Prostate gland (tissue), 2 donors: ENCODE measurements at regions of chr3 and their contacts with region 1.

Region 1: DNA sequence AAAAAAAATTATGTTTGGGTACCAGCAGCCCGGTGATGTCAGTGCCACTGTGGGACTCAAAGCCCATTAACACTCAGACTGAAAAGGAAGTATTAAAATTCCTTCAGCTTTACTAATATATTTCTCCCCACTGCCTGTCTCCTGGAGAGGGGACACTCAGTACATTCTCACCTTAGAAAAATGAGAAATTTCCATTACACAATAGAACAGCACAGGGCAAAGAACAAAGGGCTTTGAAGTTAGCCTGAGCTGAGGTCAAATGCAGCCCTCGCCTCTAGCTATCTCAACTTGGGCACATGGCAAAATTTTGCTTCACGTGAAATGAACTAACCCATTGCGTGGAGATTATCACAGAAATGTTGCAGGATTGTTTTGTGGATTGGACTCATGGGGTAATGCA is 80.8 kb downstream of the RARB start:
- DNase-seq: no peak
- H3K4me3 ChIP-seq: no peak overlapping the region
- H3K27ac ChIP-seq: peak overlapping the region; percentile 36 to 56
- H3K4me1 ChIP-seq: no peaks in the 10 kb centered on the region
- H3K27me3 ChIP-seq: no peaks in the 10 kb centered on the region
- CTCF ChIP-seq: no peak
- POLR2A ChIP-seq: no peak

Region 2: GRCh38 chr3:24420224-24420623 is 1088.7 kb before region 1 on chr3:
- intact Hi-C with region 1: no loop called
- DNase-seq: no peak
- H3K4me3 ChIP-seq: no peak overlapping the region
- H3K27ac ChIP-seq: no peak overlapping the region
- H3K4me1 ChIP-seq: no peaks in the 10 kb centered on the region
- H3K27me3 ChIP-seq: no peaks in the 10 kb centered on the region
- CTCF ChIP-seq: no peak
- POLR2A ChIP-seq: no peak

Region 3: DNA sequence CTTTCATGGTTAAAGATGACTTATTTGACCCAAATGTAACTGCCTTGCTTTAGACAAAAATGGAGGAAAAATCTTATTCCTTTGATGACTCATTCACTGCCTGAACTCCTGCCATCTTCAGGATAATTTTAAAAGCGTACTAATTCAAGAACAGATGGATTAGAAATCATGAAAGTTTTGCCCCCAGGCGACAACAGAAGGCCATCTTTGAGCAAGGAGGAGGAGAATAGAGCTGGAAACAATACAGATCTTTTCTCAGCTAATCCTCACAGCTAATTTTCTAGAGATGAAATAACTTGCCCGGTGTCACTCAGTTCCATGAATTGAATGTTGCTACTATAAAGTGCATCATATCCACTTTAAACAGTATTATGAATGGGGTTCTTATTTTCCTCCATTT is 405.5 kb before region 1 on chr3:
- intact Hi-C with region 1: no loop called
- DNase-seq: no peak
- H3K4me3 ChIP-seq: no peak overlapping the region
- H3K27ac ChIP-seq: no peak overlapping the region
- H3K4me1 ChIP-seq: no peaks in the 10 kb centered on the region
- H3K27me3 ChIP-seq: no peaks in the 10 kb centered on the region
- CTCF ChIP-seq: no peak
- POLR2A ChIP-seq: no peak

Region 4: DNA sequence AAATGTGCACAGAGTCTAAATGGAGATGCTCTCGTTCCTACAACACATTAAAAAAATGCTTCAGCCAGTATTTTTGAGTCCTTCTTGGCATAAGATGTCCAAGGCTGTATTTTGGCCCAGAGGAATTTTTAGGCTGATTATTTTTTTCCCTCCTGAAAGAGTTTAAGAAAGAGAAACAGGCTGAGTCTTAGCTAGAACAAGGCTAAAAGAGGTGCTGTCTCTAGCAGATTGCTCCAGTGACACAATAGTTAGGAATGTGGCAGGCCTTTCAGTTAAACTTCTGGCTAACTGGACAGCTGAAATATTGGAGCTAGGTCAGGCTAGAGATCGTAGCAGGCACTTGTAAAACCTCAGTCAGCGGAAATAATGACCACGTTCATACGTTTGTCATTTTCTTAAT is 352.3 kb before region 1 on chr3:
- intact Hi-C with region 1: loop called (anchors 10 kb)
- DNase-seq: no peak
- H3K4me3 ChIP-seq: no peak overlapping the region
- H3K27ac ChIP-seq: no peak overlapping the region
- H3K4me1 ChIP-seq: no peaks in the 10 kb centered on the region
- H3K27me3 ChIP-seq: no peaks in the 10 kb centered on the region
- CTCF ChIP-seq: no peak
- POLR2A ChIP-seq: no peak

Region 5: DNA sequence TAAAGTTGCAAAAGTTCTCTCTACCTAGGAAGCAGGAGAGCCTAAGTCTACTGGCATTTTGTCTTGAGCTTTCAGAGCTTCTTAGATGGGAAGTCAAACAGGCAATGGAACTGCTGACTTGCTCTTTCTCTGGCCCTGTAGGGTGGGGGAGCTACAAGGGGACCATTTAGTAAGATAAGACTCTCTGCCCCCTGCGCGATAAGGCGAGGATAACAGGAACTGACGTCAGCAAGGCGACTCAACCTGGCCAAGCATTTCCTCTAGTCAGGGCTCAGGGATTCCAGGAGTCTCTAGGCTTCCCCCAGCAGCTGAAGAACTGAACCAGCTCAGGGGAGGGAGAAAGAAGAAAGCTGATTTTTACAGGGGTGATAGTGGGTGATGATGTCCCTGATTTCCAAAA is 75.0 kb before region 1 on chr3:
- intact Hi-C with region 1: loop called (anchors 5 kb)
- DNase-seq: no peak
- H3K4me3 ChIP-seq: no peak overlapping the region
- H3K27ac ChIP-seq: peak overlapping the region; percentile 26 to 44
- H3K4me1 ChIP-seq: no peaks in the 10 kb centered on the region
- H3K27me3 ChIP-seq: no peaks in the 10 kb centered on the region
- CTCF ChIP-seq: no peak
- POLR2A ChIP-seq: no peak

Region 6: GRCh38 chr3:25573386-25574171 is 64.7 kb after region 1 on chr3:
- intact Hi-C with region 1: loop called (anchors 10 kb)
- DNase-seq: no peak
- H3K4me3 ChIP-seq: no peak overlapping the region
- H3K27ac ChIP-seq: peak overlapping the region; percentile 49 to 60
- H3K4me1 ChIP-seq: no peaks in the 10 kb centered on the region
- H3K27me3 ChIP-seq: no peaks in the 10 kb centered on the region
- CTCF ChIP-seq: no peak
- POLR2A ChIP-seq: no peak